H1 (cell line): ENCODE measurements at regions of chr14 and their contacts with region 1.

Region 1: DNA sequence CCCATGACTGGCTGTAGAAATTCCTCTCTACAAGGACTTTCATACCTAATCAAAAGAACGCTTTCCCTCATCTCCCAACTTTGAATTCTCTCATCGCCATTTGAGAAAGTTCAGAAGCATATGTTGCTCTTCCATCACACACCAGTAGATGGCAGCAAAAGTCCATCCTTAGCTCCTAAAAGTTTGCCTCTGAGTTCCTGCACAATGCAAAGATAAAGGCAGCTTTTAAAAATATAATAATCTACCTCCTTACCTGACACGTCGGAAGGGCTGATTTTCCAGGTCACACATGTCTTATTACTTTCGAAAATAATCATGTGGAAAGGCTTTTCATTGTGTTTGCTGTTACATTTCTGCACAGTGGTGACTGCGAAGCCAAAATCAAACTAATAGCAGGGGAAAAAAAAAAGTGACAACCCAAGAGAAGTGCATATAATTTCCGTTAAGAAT is 456.7 kb upstream of the SEL1L start:
- DNase-seq: peak in 1 of 2 experiments; percentile 75
- H3K4me3 ChIP-seq: no peak overlapping the region
- H3K27ac ChIP-seq: no peak overlapping the region
- H3K4me1 ChIP-seq: no peaks in the 10 kb centered on the region
- H3K27me3 ChIP-seq: no peaks in the 10 kb centered on the region
- CTCF ChIP-seq: peak in 2 of 3 experiments; percentile 81 to 85; a peak in 3 of 4 replicates
- EP300 ChIP-seq: no peak
- POLR2A ChIP-seq: no peak
- RAD21 ChIP-seq: peak; percentile 95 to 96

Region 2: GRCh38 chr14:81625343-81625742 is 365.0 kb before region 1 on chr14:
- CTCF ChIA-PET with region 1: interaction called, 42 read pairs
- POLR2A ChIA-PET with region 1: no interaction called
- DNase-seq: no peak
- H3K4me3 ChIP-seq: no peak overlapping the region
- H3K27ac ChIP-seq: no peak overlapping the region
- H3K4me1 ChIP-seq: no peaks in the 10 kb centered on the region
- H3K27me3 ChIP-seq: no peaks in the 10 kb centered on the region
- CTCF ChIP-seq: peak in 1 of 3 experiments; percentile 46; a peak in 2 of 4 replicates
- EP300 ChIP-seq: no peak
- POLR2A ChIP-seq: no peak
- RAD21 ChIP-seq: peak; percentile 71 to 72

Region 3: GRCh38 chr14:81715731-81716130 is 274.6 kb before region 1 on chr14:
- CTCF ChIA-PET with region 1: interaction called, 29 read pairs
- POLR2A ChIA-PET with region 1: no interaction called
- DNase-seq: no peak
- H3K4me3 ChIP-seq: no peak overlapping the region
- H3K27ac ChIP-seq: no peak overlapping the region
- H3K4me1 ChIP-seq: no peaks in the 10 kb centered on the region
- H3K27me3 ChIP-seq: no peaks in the 10 kb centered on the region
- CTCF ChIP-seq: no peak
- EP300 ChIP-seq: no peak
- POLR2A ChIP-seq: no peak
- RAD21 ChIP-seq: no peak

Region 4: DNA sequence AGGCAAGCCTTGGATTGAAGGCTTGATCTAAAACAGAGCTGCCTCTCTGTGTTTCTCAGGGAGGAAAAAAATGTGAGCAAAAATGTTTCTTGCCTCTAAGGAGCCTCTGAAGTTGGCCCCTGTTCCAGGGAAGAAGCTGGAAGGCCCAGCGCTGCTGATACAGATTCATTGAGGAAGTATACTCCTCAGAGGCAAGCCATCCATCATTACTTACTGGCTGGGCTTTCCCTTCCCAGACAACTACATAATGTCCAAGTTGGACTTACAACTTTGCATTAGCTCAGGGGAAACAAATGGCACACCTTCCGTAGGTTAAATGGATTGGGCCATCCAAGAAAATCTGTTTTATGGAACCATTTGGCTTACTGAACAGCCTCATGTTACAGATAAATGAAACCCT is 193.0 kb before region 1 on chr14:
- CTCF ChIA-PET with region 1: no interaction called
- POLR2A ChIA-PET with region 1: no interaction called
- DNase-seq: no peak
- H3K4me3 ChIP-seq: no peak overlapping the region
- H3K27ac ChIP-seq: no peak overlapping the region
- H3K4me1 ChIP-seq: peaks cover 0 to 10% (median 2%) of the 10 kb centered on the region in 4 experiments; a peak in 2 of 7 replicates
- H3K27me3 ChIP-seq: no peaks in the 10 kb centered on the region
- CTCF ChIP-seq: no peak
- EP300 ChIP-seq: no peak
- POLR2A ChIP-seq: no peak
- RAD21 ChIP-seq: no peak

Region 5: GRCh38 chr14:82003426-82003825 is 13.1 kb after region 1 on chr14:
- CTCF ChIA-PET with region 1: interaction called, 61 read pairs
- POLR2A ChIA-PET with region 1: no interaction called
- DNase-seq: no peak
- H3K4me3 ChIP-seq: no peak overlapping the region
- H3K27ac ChIP-seq: no peak overlapping the region
- H3K4me1 ChIP-seq: no peaks in the 10 kb centered on the region
- H3K27me3 ChIP-seq: no peaks in the 10 kb centered on the region
- CTCF ChIP-seq: no peak
- EP300 ChIP-seq: no peak
- POLR2A ChIP-seq: no peak
- RAD21 ChIP-seq: no peak

Region 6: DNA sequence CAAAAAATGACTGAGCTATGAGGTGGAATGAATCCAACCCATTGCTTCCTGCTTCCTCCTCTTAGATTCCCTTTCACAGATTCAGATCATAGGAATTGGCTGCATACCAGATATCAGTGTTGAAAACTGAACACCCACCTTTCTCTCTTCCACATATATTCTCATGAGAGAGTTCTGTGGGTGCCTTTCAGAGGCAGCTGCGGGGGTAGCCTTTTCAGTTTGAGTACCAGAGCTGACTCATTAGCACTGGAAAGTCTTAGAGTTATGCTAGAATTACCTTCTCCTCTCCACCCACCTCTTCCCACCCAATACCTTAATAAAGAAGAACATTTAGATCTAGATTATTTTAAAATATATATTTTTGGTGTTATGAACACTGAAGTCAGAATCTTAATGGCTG is 38.7 kb after region 1 on chr14:
- CTCF ChIA-PET with region 1: no interaction called
- POLR2A ChIA-PET with region 1: no interaction called
- DNase-seq: no peak
- H3K4me3 ChIP-seq: no peak overlapping the region
- H3K27ac ChIP-seq: no peak overlapping the region
- H3K4me1 ChIP-seq: no peaks in the 10 kb centered on the region
- H3K27me3 ChIP-seq: no peaks in the 10 kb centered on the region
- CTCF ChIP-seq: no peak
- EP300 ChIP-seq: no peak
- POLR2A ChIP-seq: no peak
- RAD21 ChIP-seq: no peak

Region 7: GRCh38 chr14:82046512-82047226 is 56.3 kb after region 1 on chr14:
- CTCF ChIA-PET with region 1: no interaction called
- POLR2A ChIA-PET with region 1: no interaction called
- DNase-seq: no peak
- H3K4me3 ChIP-seq: no peak overlapping the region
- H3K27ac ChIP-seq: no peak overlapping the region
- H3K4me1 ChIP-seq: no peaks in the 10 kb centered on the region
- H3K27me3 ChIP-seq: no peaks in the 10 kb centered on the region
- CTCF ChIP-seq: no peak
- EP300 ChIP-seq: no peak
- POLR2A ChIP-seq: no peak
- RAD21 ChIP-seq: no peak

Region 8: GRCh38 chr14:82060219-82060618 is 69.9 kb after region 1 on chr14:
- CTCF ChIA-PET with region 1: no interaction called
- POLR2A ChIA-PET with region 1: no interaction called
- DNase-seq: peak in 1 of 2 experiments; percentile 50
- H3K4me3 ChIP-seq: peak overlapping the region in 1 of 4 experiments; percentile 20; a peak in 1 of 8 replicates
- H3K27ac ChIP-seq: 0 out of 2 replicates have a peak overlapping the region, but pooled peaks have one; percentile 7
- H3K4me1 ChIP-seq: peaks cover 0 to 5% (median 3%) of the 10 kb centered on the region in 4 experiments; a peak in 3 of 7 replicates
- H3K27me3 ChIP-seq: no peaks in the 10 kb centered on the region
- CTCF ChIP-seq: no peak
- EP300 ChIP-seq: no peak
- POLR2A ChIP-seq: no peak
- RAD21 ChIP-seq: 0 out of 4 replicates have a peak, but pooled peaks of 1 of the 2 experiments have one; percentile 3

Region 9: GRCh38 chr14:82091097-82091496 is 100.8 kb after region 1 on chr14:
- CTCF ChIA-PET with region 1: interaction called, 12 read pairs
- POLR2A ChIA-PET with region 1: no interaction called
- DNase-seq: no peak
- H3K4me3 ChIP-seq: no peak overlapping the region
- H3K27ac ChIP-seq: no peak overlapping the region
- H3K4me1 ChIP-seq: 0 out of 7 replicates have a peak, but pooled peaks cover 0 to 3% (median 0%) of the 10 kb centered on the region in 4 experiments
- H3K27me3 ChIP-seq: no peaks in the 10 kb centered on the region
- CTCF ChIP-seq: no peak
- EP300 ChIP-seq: no peak
- POLR2A ChIP-seq: no peak
- RAD21 ChIP-seq: no peak